Activated B cell treated with CpG ODN at 0.5 μM for 24 hours (primary cell): ENCODE measurements at regions of chr17 and their contacts with region 1.

Region 1: GRCh38 chr17:3688027-3688553 is 7.9 kb downstream of the P2RX5 start:
- DNase-seq: peak; percentile 49
- ATAC-seq: peak; percentile 31
- H3K4me3 Mint-ChIP-seq: peak overlapping the region; percentile 71
- H3K27ac Mint-ChIP-seq: peak overlapping the region; percentile 82
- H3K4me1 Mint-ChIP-seq: peaks cover 71% of the 10 kb centered on the region
- H3K27me3 Mint-ChIP-seq: no peaks in the 10 kb centered on the region
- CTCF ChIP-seq: no peak

Region 2: DNA sequence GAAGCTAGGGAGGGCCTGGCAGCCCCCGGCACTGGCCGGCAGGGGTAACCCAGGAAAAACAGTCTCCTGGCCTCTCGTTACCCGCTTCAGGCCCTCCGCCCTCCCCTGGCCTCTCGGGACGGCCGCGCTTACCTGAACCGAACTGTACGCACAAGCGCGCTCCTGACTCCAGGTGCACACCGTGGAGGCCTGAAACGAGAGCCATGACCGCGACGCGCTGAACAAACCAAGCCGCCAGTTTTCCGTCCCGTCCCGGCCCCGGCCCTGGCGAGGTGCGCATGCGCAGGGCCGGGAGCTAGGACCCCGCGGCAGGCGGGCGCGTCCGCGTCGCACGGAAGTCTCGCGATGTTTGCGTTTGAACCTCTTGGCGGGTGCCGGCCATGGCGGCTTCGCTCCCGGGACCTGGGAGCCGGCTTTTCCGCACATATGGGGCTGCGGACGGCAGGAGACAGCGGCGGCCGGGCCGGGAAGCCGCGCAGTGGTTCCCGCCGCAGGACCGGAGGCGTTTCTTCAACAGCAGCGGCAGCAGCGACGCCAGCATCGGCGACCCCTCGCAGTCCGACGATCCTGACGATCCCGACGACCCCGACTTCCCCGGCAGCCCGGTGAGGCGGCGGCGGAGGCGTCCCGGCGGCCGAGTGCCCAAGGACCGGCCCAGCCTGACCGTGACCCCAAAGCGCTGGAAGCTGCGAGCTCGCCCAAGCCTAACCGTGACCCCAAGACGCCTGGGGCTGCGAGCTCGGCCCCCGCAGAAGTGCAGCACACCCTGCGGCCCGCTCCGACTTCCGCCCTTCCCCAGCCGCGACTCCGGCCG is 35.7 kb after region 1 on chr17 and contains the start of gene HASPIN:
- CTCF ChIA-PET with region 1: interaction called, 18 read pairs
- POLR2A ChIA-PET with region 1: interaction called, 52 read pairs
- intact Hi-C with region 1: loop called (anchors 2 kb)
- DNase-seq: peak; percentile 91
- ATAC-seq: peak; percentile 73
- H3K4me3 Mint-ChIP-seq: peak within 1 kb of the TSS; percentile 92
- H3K27ac Mint-ChIP-seq: peak within 1 kb of the TSS; percentile 85
- H3K4me1 Mint-ChIP-seq: peaks cover 72% of the 10 kb centered on the region
- H3K27me3 Mint-ChIP-seq: no peaks in the 10 kb centered on the region
- CTCF ChIP-seq: no peak
- total RNA-seq, gene HASPIN: 6.4 and 6.7 TPM in 2 replicates